CD4-positive, alpha-beta T cell (primary cell): ENCODE measurements at regions of chr1 and their contacts with region 1.

Region 1: DNA sequence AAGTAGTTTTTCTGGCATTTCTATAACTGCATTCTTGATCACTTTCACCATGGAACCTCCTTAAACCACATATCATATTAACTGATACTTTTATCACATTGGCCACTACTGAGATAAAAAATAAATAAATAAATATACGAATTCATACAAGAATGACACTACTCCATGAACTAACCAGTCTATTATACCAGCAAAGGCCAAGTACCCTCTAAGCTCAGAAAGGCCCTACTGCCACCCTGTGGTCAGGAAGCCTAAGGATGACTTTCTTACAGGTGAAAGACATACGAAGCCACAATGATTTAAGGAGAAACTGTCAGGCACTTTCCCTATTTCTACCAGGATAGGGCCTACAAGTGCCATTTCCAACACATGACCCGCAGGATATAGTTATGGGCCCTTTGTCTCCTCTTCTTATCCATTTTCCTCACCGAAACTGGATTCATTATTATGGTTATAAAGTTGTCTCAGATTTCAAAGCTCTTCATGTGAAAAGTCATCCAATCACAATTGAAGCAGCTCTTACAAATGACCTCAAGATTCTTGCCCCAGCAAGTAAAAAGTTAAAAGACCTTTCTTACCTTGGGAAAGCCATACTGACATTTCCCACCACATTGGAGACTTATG is 23.9 kb downstream of the DNAJC8 start:
- DNase-seq: peak; percentile 38 to 81 (median 54)
- ATAC-seq: peak; percentile 86
- H3K4me3 ChIP-seq: no peak overlapping the region
- H3K4me3 Mint-ChIP-seq: no peak overlapping the region
- H3K27ac ChIP-seq: no peak overlapping the region
- H3K27ac Mint-ChIP-seq: no peak overlapping the region
- H3K4me1 ChIP-seq: no peaks in the 10 kb centered on the region
- H3K4me1 Mint-ChIP-seq: peaks cover 7% of the 10 kb centered on the region
- H3K27me3 ChIP-seq: no peaks in the 10 kb centered on the region
- H3K27me3 Mint-ChIP-seq: no peaks in the 10 kb centered on the region
- CTCF ChIP-seq: peak; percentile 68

Region 2: GRCh38 chr1:28172713-28173150 is 36.2 kb before region 1 on chr1:
- CTCF ChIA-PET with region 1: interaction called, 3 read pairs
- POLR2A ChIA-PET with region 1: no interaction called
- intact Hi-C with region 1: loop called in 1 of 2 experiments (anchors 5 kb)
- DNase-seq: peak in 4 of 14 experiments; percentile 13 to 61 (median 54)
- ATAC-seq: peak; percentile 13
- H3K4me3 ChIP-seq: no peak overlapping the region
- H3K4me3 Mint-ChIP-seq: peak overlapping the region; percentile 42
- H3K27ac ChIP-seq: no peak overlapping the region
- H3K27ac Mint-ChIP-seq: peak overlapping the region; percentile 7
- H3K4me1 ChIP-seq: peaks cover 46% of the 10 kb centered on the region
- H3K4me1 Mint-ChIP-seq: peaks cover 41% of the 10 kb centered on the region
- H3K27me3 ChIP-seq: no peaks in the 10 kb centered on the region
- H3K27me3 Mint-ChIP-seq: no peaks in the 10 kb centered on the region
- CTCF ChIP-seq: no peak

Region 3: DNA sequence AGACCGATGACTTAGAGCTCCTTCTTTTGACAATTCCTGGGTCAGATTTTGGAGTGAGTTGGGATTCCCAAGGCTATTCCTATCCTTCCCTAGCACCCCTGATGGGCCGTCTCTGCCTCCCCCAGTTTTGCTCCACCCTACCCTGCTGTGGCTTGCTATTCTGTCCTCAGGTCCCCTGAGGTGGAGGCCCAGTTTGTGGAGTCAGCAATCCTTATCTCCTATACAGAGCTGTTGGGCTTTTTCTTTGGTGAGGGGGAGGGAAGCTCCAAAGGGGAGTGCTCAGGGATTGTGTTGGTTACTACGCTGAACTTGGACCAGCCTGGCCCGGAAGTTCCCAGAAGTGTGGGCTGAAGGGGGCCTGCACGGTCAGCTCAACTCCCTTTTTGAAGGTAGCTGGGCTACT is 58.0 kb after region 1 on chr1:
- CTCF ChIA-PET with region 1: no interaction called
- POLR2A ChIA-PET with region 1: no interaction called
- intact Hi-C with region 1: no loop called
- DNase-seq: no peak
- ATAC-seq: no peak
- H3K4me3 ChIP-seq: no peak overlapping the region
- H3K4me3 Mint-ChIP-seq: no peak overlapping the region
- H3K27ac ChIP-seq: no peak overlapping the region
- H3K27ac Mint-ChIP-seq: no peak overlapping the region
- H3K4me1 ChIP-seq: peaks cover 8% of the 10 kb centered on the region
- H3K4me1 Mint-ChIP-seq: peaks cover 5% of the 10 kb centered on the region
- H3K27me3 ChIP-seq: no peaks in the 10 kb centered on the region
- H3K27me3 Mint-ChIP-seq: no peaks in the 10 kb centered on the region
- CTCF ChIP-seq: no peak

Region 4: GRCh38 chr1:29688471-29689365 is 1479.8 kb after region 1 on chr1:
- CTCF ChIA-PET with region 1: no interaction called
- POLR2A ChIA-PET with region 1: no interaction called
- intact Hi-C with region 1: no loop called
- DNase-seq: no peak
- ATAC-seq: no peak
- H3K4me3 ChIP-seq: no peak overlapping the region
- H3K4me3 Mint-ChIP-seq: no peak overlapping the region
- H3K27ac ChIP-seq: no peak overlapping the region
- H3K27ac Mint-ChIP-seq: no peak overlapping the region
- H3K4me1 ChIP-seq: no peaks in the 10 kb centered on the region
- H3K4me1 Mint-ChIP-seq: no peaks in the 10 kb centered on the region
- H3K27me3 ChIP-seq: peaks cover 8 to 17% of the 10 kb centered on the region in 2 experiments
- H3K27me3 Mint-ChIP-seq: peaks cover 20% of the 10 kb centered on the region
- CTCF ChIP-seq: no peak